ENCODE measurements at regions of chr16 and their contacts with region 1.

Region 1: DNA sequence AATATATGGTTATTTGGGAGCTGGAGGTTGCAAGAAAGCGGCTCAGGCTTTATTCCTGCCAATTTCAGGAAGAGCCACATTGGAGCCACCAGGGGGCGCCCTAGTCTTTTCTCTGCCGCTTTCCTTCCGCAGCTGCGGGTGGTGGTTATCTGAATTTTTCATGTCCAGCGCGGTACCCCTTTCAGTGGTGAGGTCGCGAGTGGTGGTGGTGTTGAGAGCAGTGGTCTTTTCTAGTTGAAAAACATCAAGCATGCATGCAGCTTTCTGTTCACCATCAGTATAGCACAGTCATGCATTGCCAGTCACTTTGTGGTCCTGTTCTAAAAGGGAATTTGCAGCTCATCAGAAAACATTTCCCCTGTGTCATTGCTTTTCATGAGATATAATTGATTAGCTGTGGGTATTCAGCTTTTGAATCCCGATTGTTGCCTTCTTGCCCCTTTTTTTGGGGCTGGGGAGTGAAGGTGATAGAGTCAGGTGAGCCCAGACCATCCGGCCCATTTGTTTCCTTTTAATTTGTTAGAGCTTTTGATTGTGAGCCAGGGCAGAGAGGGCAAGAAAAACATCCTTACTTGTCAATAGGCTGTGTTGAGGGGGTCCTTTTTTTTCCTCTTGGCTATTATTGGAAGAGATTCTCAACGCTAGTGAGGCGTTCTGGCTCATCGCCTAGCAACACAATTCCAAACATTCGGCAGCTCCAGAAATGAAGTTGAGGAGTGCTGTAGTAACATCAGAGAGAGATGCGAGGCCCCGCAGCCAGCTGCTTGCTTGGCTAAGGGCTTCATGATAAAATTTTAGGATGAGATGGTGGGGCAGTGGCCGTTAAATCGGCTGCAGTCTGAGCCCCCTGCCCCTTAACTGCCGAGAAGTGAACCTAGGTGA is 119.0 kb downstream of the SNX29 start:
- DNase-seq: peak; percentile 57
- H3K4me3 Mint-ChIP-seq: no peak overlapping the region
- H3K27ac Mint-ChIP-seq: no peak overlapping the region
- H3K4me1 Mint-ChIP-seq: peaks cover 16% of the 10 kb centered on the region
- H3K27me3 Mint-ChIP-seq: no peaks in the 10 kb centered on the region
- CTCF ChIP-seq: peak; percentile 82

Region 2: DNA sequence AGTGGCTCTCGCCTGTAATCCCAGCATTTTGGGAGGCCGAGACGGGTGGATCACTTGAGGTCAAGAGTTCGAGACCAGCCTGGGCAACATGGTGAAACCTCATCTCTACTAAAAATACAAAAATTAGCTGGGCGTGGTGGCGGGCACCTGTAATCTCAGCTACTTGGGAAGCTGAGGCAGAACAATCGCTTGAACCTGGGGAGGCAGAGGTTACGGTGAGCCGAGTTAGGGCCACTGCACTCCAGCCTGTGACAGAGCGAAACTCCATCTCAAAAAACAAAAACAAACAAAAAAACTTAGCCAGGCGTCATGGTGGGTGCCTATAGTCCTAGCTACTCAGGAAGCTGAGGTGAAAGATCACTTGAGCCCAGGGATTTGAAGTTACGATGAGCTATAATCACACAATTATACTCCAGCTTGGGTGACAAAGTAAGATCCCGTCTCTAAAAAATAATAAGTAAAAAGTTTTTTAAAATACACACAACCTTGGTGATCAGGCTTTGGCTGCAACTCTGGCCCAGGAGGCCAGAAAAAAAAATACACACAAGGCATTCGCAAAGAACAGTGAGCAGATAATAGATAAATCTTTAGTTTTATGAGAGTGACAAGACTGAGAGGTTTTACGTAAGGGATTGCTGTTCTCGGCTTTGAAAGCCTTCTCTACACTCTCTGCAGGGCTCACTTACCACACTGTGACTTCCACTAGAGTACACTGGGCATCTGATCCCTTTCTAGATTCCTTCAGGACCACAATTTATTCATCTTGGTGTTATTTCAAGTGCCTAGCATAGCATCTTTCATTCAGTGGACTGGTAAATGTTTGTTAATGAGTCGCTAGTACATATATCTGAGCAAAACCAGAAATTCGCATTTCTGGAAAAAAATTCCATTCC is 185.6 kb before region 1 on chr16:
- CTCF ChIA-PET with region 1: no interaction called
- POLR2A ChIA-PET with region 1: no interaction called
- intact Hi-C with region 1: no loop called
- DNase-seq: no peak
- H3K4me3 Mint-ChIP-seq: no peak overlapping the region
- H3K27ac Mint-ChIP-seq: peak overlapping the region; percentile 63
- H3K4me1 Mint-ChIP-seq: peaks cover 24% of the 10 kb centered on the region
- H3K27me3 Mint-ChIP-seq: no peaks in the 10 kb centered on the region
- CTCF ChIP-seq: no peak

Region 3: GRCh38 chr16:12054396-12054795 is 41.1 kb before region 1 on chr16:
- CTCF ChIA-PET with region 1: no interaction called
- POLR2A ChIA-PET with region 1: no interaction called
- intact Hi-C with region 1: no loop called
- DNase-seq: no peak
- H3K4me3 Mint-ChIP-seq: no peak overlapping the region
- H3K27ac Mint-ChIP-seq: no peak overlapping the region
- H3K4me1 Mint-ChIP-seq: no peaks in the 10 kb centered on the region
- H3K27me3 Mint-ChIP-seq: no peaks in the 10 kb centered on the region
- CTCF ChIP-seq: no peak

Region 4: DNA sequence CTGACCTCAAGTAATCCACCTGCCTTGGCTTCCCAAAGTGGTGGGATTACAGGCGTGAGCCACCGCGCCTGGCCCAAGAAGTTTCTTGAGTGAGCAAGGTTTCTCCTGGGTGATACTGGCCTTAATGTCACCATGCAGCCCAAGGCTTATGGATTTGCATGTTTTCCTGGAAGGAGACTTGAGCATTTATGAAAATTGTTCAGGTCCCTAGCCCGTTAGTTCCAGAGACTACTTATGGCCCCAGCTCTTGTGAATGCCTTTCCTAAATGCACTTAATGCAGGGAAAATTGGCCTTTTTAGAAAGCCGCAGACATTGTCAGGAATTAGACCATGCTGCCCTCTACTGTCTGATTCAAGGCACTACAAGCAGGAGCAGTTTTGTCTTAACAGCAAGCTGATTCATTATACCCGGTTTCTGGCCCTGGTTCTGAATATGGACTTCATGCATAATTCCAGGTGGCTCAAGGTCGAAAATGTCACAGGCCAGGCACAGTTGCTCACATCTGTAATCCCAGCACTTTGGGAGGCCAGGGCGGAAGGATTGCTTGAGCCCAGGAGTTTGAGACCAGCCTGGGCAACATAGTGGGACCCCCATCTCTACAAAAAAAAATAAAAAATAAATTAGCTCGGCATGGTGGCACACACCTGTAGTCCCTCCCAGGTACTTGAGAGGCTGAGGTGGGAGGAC is 27.7 kb before region 1 on chr16:
- CTCF ChIA-PET with region 1: interaction called, 23 read pairs
- POLR2A ChIA-PET with region 1: interaction called, 3 read pairs
- intact Hi-C with region 1: no loop called
- DNase-seq: peak; percentile 80
- H3K4me3 Mint-ChIP-seq: no peak overlapping the region
- H3K27ac Mint-ChIP-seq: no peak overlapping the region
- H3K4me1 Mint-ChIP-seq: peaks cover 1% of the 10 kb centered on the region
- H3K27me3 Mint-ChIP-seq: no peaks in the 10 kb centered on the region
- CTCF ChIP-seq: peak; percentile 90

Region 5: GRCh38 chr16:12113523-12114345 is 18.2 kb after region 1 on chr16:
- CTCF ChIA-PET with region 1: interaction called, 85 read pairs
- POLR2A ChIA-PET with region 1: no interaction called
- intact Hi-C with region 1: no loop called
- DNase-seq: no peak
- H3K4me3 Mint-ChIP-seq: no peak overlapping the region
- H3K27ac Mint-ChIP-seq: no peak overlapping the region
- H3K4me1 Mint-ChIP-seq: no peaks in the 10 kb centered on the region
- H3K27me3 Mint-ChIP-seq: no peaks in the 10 kb centered on the region
- CTCF ChIP-seq: no peak

Region 6: GRCh38 chr16:12147681-12148080 is 52.2 kb after region 1 on chr16:
- CTCF ChIA-PET with region 1: interaction called, 20 read pairs
- POLR2A ChIA-PET with region 1: no interaction called
- intact Hi-C with region 1: no loop called
- DNase-seq: no peak
- H3K4me3 Mint-ChIP-seq: no peak overlapping the region
- H3K27ac Mint-ChIP-seq: no peak overlapping the region
- H3K4me1 Mint-ChIP-seq: no peaks in the 10 kb centered on the region
- H3K27me3 Mint-ChIP-seq: no peaks in the 10 kb centered on the region
- CTCF ChIP-seq: no peak

Region 7: GRCh38 chr16:12271006-12271405 is 175.5 kb after region 1 on chr16:
- CTCF ChIA-PET with region 1: interaction called, 3 read pairs
- POLR2A ChIA-PET with region 1: no interaction called
- intact Hi-C with region 1: loop called (anchors 10 kb)
- DNase-seq: peak; percentile 33
- H3K4me3 Mint-ChIP-seq: no peak overlapping the region
- H3K27ac Mint-ChIP-seq: no peak overlapping the region
- H3K4me1 Mint-ChIP-seq: peaks cover 4% of the 10 kb centered on the region
- H3K27me3 Mint-ChIP-seq: no peaks in the 10 kb centered on the region
- CTCF ChIP-seq: no peak

Region 8: DNA sequence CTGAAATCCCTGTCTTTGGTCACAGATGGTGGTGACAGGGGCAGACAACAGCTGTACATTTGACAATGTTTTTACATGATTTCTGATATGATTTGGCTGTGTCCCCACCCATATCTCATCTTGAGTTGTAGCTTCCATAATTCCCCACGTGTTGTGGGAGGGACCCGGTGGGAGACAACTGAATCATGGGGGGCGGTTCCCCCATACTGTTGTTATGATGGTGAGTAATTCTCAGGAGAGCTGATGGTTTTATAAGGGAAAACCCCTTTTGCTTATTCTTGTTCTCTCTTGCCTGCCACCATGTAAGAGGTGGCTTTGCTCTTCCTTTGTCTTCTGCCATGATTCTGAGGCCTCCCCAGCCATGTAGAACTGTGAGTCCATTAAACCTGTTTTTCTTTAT is 354.3 kb after region 1 on chr16:
- CTCF ChIA-PET with region 1: interaction called, 20 read pairs
- POLR2A ChIA-PET with region 1: no interaction called
- intact Hi-C with region 1: no loop called
- DNase-seq: peak; percentile 1
- H3K4me3 Mint-ChIP-seq: no peak overlapping the region
- H3K27ac Mint-ChIP-seq: no peak overlapping the region
- H3K4me1 Mint-ChIP-seq: no peaks in the 10 kb centered on the region
- H3K27me3 Mint-ChIP-seq: no peaks in the 10 kb centered on the region
- CTCF ChIP-seq: no peak

Region 9: GRCh38 chr16:12620150-12620549 is 524.6 kb after region 1 on chr16:
- CTCF ChIA-PET with region 1: interaction called, 20 read pairs
- POLR2A ChIA-PET with region 1: no interaction called
- intact Hi-C with region 1: no loop called
- DNase-seq: no peak
- H3K4me3 Mint-ChIP-seq: no peak overlapping the region
- H3K27ac Mint-ChIP-seq: no peak overlapping the region
- H3K4me1 Mint-ChIP-seq: no peaks in the 10 kb centered on the region
- H3K27me3 Mint-ChIP-seq: no peaks in the 10 kb centered on the region
- CTCF ChIP-seq: no peak